ENCODE measurements at regions of chr5 and their contacts with region 1.

Region 1: GRCh38 chr5:122774861-122775549 is at the start of gene SNX2:
- DNase-seq: peak; percentile 97 to 99
- ATAC-seq: peak; percentile 99
- H3K4me3 ChIP-seq: peak within 1 kb of the TSS; percentile 79 to 82
- H3K27ac ChIP-seq: peak within 1 kb of the TSS; percentile 15 to 73
- H3K4me1 ChIP-seq: peaks cover 3 to 6% of the 10 kb centered on the region in 2 donors
- H3K27me3 ChIP-seq: no peaks in the 10 kb centered on the region
- total RNA-seq, gene SNX2: 86.8 to 93.8 TPM

Region 2: GRCh38 chr5:122751293-122751753 is 23.7 kb before region 1 on chr5:
- intact Hi-C with region 1: loop called in 1 of 2 experiments (anchors 2 kb)
- DNase-seq: peak in 1 of 2 donors; percentile 71
- ATAC-seq: no peak
- H3K4me3 ChIP-seq: no peak overlapping the region
- H3K27ac ChIP-seq: no peak overlapping the region
- H3K4me1 ChIP-seq: no peaks in the 10 kb centered on the region
- H3K27me3 ChIP-seq: no peaks in the 10 kb centered on the region

Region 3: DNA sequence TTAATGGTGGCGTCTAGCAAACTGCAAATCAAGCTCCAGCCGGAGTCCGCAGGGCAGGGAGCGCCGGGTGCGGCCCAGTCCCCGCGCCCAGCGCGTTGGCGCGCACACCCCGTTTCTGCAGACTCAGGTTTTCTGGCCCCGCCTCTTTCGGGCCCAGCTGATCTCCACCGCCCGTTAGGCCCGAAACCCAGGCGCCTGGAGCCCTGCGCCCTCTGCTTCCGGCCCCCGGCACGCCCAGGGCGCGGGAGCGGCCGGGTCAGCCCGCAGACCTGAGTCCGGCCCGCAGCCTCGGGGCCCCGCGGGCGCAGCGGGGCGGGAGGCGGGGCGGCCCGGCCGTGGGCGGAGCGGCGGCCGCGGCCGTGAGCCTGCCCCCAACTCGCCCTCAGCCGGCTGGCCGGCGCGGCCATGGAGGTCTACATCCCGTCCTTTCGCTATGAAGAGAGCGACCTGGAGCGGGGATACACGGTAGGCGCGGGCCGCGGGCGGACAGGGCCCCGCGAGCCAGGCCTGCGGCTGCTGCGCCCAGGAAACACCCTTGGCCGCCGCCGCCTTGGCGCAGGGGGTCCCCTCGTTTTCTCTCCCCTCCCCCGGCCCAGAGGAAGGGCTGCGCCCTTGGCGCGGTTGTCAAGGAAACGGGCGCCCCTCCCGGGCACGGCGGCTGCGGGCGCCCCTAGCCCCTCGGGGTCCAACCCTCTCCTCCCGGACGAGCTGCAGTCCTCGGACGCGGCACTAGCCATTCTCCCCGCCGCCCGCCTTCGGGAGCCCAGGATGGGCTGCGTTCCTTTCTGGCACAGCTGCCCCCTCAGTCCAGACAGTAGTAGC is 70.4 kb after region 1 on chr5 and contains the start of gene SNX24:
- intact Hi-C with region 1: loop called in 1 of 2 experiments (anchors 2 kb)
- DNase-seq: peak; percentile 91 to 93
- ATAC-seq: peak; percentile 90
- H3K4me3 ChIP-seq: peak within 1 kb of the TSS; percentile 67 to 93
- H3K27ac ChIP-seq: peak within 1 kb of the TSS; percentile 53 to 64
- H3K4me1 ChIP-seq: no peaks in the 10 kb centered on the region
- H3K27me3 ChIP-seq: no peaks in the 10 kb centered on the region
- total RNA-seq, gene SNX24: 20.6 to 21.0 TPM